ENCODE measurements at regions of chr19 and their contacts with region 1.

Region 1: DNA sequence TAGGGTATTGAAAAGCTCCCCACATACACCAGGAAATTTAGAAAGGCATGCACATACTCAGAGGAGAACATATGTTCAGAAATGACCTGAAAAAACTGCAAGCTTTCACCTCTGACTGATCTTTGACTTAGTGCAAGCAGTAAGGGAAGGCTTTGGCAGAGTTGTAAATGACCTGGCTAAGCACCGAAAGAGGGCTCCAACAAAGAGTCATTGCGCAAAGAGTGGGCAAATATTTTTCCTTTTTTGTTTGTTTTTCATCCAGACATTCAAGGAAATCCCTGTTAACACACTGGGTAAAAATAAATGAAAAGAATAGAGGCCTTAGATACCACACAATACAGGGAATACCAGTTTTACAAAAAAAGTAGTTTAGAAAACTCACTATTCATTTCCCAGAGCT is 5.2 kb upstream of the ZNF233 start:
- DNase-seq: no peak
- H3K4me3 ChIP-seq: no peak overlapping the region
- H3K27ac ChIP-seq: no peak overlapping the region
- H3K4me1 ChIP-seq: no peaks in the 10 kb centered on the region
- H3K27me3 ChIP-seq: no peaks in the 10 kb centered on the region
- CTCF ChIP-seq: no peak
- POLR2A ChIP-seq: no peak

Region 2: DNA sequence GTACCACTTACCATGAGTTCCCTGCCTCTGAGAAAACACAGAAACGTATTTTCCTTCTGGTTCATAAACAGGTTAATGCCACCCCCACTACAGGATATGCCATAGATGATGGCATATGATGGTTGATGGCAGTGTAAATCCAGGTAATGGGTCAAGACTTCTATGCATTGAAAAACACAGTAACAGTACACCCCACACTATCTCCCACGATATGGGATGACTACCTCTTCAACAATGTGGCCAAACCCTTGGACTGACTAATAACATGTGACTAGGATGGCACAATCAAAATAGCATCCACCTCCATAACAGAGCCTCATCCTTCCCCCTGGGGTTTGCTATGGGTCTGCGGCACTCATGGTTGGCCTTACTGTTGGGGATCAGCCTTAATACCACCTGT is 28.4 kb after region 1 on chr19:
- intact Hi-C with region 1: no loop called
- DNase-seq: no peak
- H3K4me3 ChIP-seq: no peak overlapping the region
- H3K27ac ChIP-seq: no peak overlapping the region
- H3K4me1 ChIP-seq: no peaks in the 10 kb centered on the region
- H3K27me3 ChIP-seq: no peaks in the 10 kb centered on the region
- CTCF ChIP-seq: no peak
- POLR2A ChIP-seq: no peak

Region 3: DNA sequence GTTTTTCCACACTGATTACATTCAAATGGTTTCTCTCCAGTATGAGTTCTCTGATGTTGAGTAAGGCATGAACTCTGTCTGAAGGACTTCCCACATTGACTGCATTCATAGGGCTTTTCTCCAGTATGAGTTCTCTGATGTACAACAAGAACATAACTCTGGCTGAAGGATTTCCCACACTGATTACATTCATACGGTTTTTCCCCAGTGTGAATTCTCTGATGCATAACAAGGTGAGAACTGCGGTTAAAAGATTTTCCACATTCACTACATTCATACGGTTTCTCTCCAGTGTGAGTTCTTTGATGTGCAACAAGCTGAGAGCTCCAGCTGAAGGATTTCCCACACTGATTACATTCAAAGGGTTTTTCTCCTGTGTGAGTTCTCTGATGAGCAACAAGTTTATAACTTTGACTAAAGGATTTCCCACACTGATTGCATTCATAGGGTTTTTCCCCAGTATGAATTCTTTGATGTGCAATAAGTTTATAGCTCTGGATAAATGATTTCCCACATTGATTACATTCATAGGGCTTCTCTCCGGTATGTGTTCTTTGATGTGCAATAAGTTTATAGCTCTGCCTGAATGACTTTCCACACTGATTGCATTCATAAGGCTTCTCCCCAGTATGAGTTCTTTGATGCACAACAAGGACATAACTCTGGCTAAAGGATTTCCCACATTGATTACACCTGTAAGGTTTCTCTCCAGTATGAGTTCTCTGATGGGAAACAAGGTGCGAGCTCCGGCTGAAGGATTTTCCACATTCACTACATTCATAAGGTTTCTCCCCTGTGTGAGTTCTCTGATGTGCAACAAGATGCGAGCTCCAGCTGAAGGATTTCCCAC is 222.3 kb after region 1 on chr19:
- intact Hi-C with region 1: loop called (anchors 5 kb)
- DNase-seq: no peak
- H3K4me3 ChIP-seq: no peak overlapping the region
- H3K27ac ChIP-seq: no peak overlapping the region
- H3K4me1 ChIP-seq: no peaks in the 10 kb centered on the region
- H3K27me3 ChIP-seq: no peaks in the 10 kb centered on the region
- CTCF ChIP-seq: no peak
- POLR2A ChIP-seq: no peak

Measured in thyroid gland (tissue), 4 donors.